ENCODE measurements at regions of chr20 and their contacts with region 1.

Region 1: DNA sequence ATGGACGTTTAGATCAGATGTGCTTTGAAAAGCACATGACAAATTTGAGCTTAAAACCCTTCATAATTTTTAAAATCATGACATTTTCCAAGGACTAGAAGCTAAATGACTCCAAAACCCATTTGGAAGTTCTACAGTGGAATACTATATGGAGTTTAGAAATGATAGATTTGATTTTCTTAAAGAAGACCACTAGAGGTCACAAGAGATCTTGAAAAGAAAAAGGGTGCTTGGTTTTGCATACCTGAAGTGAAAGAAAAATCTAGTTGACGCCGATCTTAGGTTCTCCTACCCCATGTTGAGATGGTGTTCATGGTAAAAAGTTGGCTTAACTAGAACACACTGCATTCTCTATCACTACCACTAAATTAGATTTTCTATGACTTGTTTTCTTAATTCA is 31.5 kb downstream of the CFAP61 start:
- DNase-seq: peak in 3 of 14 experiments; percentile 20 to 54 (median 52)
- ATAC-seq: peak; percentile 24
- H3K4me3 ChIP-seq: no peak overlapping the region
- H3K4me3 Mint-ChIP-seq: no peak overlapping the region
- H3K27ac ChIP-seq: no peak overlapping the region
- H3K27ac Mint-ChIP-seq: no peak overlapping the region
- H3K4me1 ChIP-seq: no peaks in the 10 kb centered on the region
- H3K4me1 Mint-ChIP-seq: peaks cover 5% of the 10 kb centered on the region
- H3K27me3 ChIP-seq: peaks cover 0 to 5% of the 10 kb centered on the region in 2 experiments
- H3K27me3 Mint-ChIP-seq: peaks cover 19% of the 10 kb centered on the region
- CTCF ChIP-seq: peak; percentile 71

Region 2: DNA sequence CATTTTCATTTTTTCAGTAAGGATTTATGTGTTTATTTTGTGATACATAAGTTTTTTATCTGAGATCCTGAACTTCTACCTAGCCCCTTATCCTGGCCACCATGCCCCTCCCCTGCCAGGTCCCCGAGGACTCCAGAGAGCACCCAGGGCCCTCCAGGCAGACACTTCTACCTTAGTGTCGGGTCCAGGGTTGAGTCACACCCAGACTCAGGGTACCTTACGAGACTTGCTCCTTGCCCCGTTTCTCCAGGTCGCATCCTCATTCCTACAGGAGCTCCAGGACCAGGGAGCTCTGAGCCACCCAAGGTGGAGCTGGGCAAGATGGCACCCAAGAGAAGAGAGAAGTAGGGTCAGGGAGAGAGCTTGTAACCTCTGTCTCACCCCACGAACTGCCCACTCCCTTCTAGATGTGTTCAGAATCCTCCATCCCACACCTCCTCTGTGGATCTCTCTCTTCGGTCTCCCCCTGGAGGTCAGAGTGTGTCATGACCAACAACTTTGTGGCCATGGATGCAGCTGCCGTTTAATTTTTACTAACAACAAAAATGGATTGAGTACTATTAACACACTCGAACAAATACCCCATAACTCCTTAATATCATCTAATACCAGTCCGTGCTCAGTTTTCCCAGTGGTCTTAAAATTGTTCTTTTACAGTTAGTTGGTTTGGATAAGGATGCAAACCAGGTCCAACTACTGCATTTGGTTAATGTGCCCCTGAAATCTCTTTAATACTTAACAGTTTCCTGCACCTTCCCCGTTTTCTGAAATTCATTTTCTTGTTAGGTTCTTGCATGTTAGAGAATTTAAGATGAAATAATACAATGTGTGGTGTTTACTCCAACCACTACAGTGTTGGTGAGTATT is 153.5 kb after region 1 on chr20:
- CTCF ChIA-PET with region 1: no interaction called
- POLR2A ChIA-PET with region 1: interaction called, 3 read pairs
- intact Hi-C with region 1: loop called (anchors 2 to 10 kb)
- DNase-seq: peak in 3 of 14 experiments; percentile 20 to 38 (median 33)
- ATAC-seq: no peak
- H3K4me3 ChIP-seq: no peak overlapping the region
- H3K4me3 Mint-ChIP-seq: no peak overlapping the region
- H3K27ac ChIP-seq: no peak overlapping the region
- H3K27ac Mint-ChIP-seq: no peak overlapping the region
- H3K4me1 ChIP-seq: no peaks in the 10 kb centered on the region
- H3K4me1 Mint-ChIP-seq: no peaks in the 10 kb centered on the region
- H3K27me3 ChIP-seq: no peaks in the 10 kb centered on the region
- H3K27me3 Mint-ChIP-seq: no peaks in the 10 kb centered on the region
- CTCF ChIP-seq: peak; percentile 27

Region 3: DNA sequence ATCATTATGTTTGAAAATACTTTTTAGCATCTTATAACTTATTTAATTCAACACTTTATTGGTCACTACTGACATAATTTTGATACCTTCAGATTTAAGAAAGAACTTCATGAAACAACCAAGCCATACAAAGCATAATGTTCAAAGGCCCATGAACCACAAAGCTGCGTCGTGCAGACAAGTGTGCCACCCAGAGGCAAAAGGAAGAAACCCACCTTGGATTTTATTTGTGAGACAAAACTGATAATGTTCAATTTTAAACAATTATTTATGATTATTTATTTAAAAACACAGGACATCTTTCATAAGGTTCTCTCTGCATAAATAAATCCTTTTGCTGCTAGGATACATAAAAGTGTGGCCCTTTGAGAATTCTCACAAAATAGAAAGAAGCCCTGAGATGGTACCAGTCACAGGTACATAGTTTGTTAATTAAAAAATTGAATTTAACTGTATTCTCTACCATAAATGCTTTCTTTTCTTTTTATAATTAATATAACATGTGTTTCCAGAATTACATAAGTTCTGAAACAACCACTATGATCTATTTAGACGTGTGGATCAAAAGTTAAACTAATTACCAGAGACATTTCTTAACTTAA is 484.9 kb after region 1 on chr20:
- CTCF ChIA-PET with region 1: no interaction called
- POLR2A ChIA-PET with region 1: no interaction called
- intact Hi-C with region 1: loop called (anchors 1 to 2 kb)
- DNase-seq: peak in 5 of 14 experiments; percentile 6 to 45 (median 33)
- ATAC-seq: no peak
- H3K4me3 ChIP-seq: no peak overlapping the region
- H3K4me3 Mint-ChIP-seq: no peak overlapping the region
- H3K27ac ChIP-seq: no peak overlapping the region
- H3K27ac Mint-ChIP-seq: no peak overlapping the region
- H3K4me1 ChIP-seq: no peaks in the 10 kb centered on the region
- H3K4me1 Mint-ChIP-seq: no peaks in the 10 kb centered on the region
- H3K27me3 ChIP-seq: no peaks in the 10 kb centered on the region
- H3K27me3 Mint-ChIP-seq: no peaks in the 10 kb centered on the region
- CTCF ChIP-seq: peak; percentile 62

Region 4: GRCh38 chr20:20593447-20594170 is 509.8 kb after region 1 on chr20:
- CTCF ChIA-PET with region 1: no interaction called
- POLR2A ChIA-PET with region 1: no interaction called
- intact Hi-C with region 1: loop called (anchors 2 to 5 kb)
- DNase-seq: peak in 2 of 14 experiments; percentile 13 to 18
- ATAC-seq: no peak
- H3K4me3 ChIP-seq: no peak overlapping the region
- H3K4me3 Mint-ChIP-seq: no peak overlapping the region
- H3K27ac ChIP-seq: no peak overlapping the region
- H3K27ac Mint-ChIP-seq: no peak overlapping the region
- H3K4me1 ChIP-seq: no peaks in the 10 kb centered on the region
- H3K4me1 Mint-ChIP-seq: no peaks in the 10 kb centered on the region
- H3K27me3 ChIP-seq: no peaks in the 10 kb centered on the region
- H3K27me3 Mint-ChIP-seq: no peaks in the 10 kb centered on the region
- CTCF ChIP-seq: peak; percentile 2

Region 5: DNA sequence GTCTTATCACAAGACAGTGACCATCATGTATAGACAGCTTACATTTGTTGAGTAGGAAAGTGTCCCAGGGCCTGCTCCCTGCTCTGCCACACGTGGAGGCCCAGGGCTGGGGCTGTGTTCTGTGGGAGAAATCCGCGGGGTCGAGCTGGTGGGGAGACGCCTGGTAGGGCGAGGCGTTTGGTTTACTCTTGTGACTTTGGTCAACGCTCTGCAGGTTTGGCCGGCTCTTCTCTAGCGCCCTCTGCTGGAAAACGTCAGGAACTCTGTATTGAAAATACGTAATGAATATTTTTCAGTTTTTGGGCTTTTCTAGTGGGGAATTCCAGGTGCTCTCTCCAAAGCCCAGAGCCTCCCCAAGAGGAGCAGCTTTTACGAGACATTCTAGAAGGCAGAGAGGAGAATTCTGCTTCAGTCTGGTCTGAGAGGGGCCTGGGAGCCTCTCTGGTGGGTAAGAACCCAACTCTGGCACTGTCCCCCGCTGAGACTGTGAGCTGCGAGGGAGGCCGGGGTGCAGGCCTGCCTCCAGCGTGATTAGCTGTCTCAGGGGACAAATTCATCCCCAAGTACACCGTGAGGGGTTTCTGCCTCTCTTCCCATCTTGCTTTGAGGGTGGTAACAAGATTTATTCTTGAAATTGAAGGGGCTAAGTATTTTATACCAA is 741.2 kb after region 1 on chr20:
- CTCF ChIA-PET with region 1: no interaction called
- POLR2A ChIA-PET with region 1: no interaction called
- intact Hi-C with region 1: loop called in 1 of 2 experiments (anchors 5 kb)
- DNase-seq: peak in 13 of 14 experiments; percentile 10 to 72 (median 29)
- ATAC-seq: no peak
- H3K4me3 ChIP-seq: no peak overlapping the region
- H3K4me3 Mint-ChIP-seq: no peak overlapping the region
- H3K27ac ChIP-seq: no peak overlapping the region
- H3K27ac Mint-ChIP-seq: no peak overlapping the region
- H3K4me1 ChIP-seq: peaks cover 4% of the 10 kb centered on the region
- H3K4me1 Mint-ChIP-seq: no peaks in the 10 kb centered on the region
- H3K27me3 ChIP-seq: peaks cover 2 to 5% of the 10 kb centered on the region in 2 experiments
- H3K27me3 Mint-ChIP-seq: peaks cover 47% of the 10 kb centered on the region
- CTCF ChIP-seq: peak; percentile 67

Measured in CD4-positive, alpha-beta T cell (primary cell).